Activated naive CD4-positive, alpha-beta T cell treated with anti-CD3 and anti-CD28 coated beads for 36 hours (primary cell): ENCODE measurements at regions of chr4 and their contacts with region 1.

Region 1: DNA sequence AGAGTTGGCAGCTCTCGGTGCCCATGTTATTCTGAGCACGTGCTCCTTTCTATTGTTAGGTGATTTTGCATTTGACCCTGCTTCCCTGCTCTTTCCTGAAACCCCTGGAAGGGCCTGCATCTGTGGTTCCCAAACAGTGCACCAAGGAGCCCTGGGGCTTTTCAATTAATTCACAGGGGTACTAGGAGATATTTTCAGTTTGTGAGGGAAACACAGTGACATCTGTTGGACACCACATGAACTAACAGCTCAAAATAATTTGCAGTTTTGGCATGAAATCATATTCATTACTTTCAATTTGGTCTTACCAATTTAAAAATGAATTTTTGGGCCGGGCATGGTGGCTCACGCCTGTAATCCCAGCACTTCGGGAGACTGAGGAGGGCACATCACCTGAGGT is 156.6 kb downstream of the GATB start:
- DNase-seq: no peak
- H3K4me3 Mint-ChIP-seq: no peak overlapping the region
- H3K27ac Mint-ChIP-seq: no peak overlapping the region
- H3K4me1 Mint-ChIP-seq: no peaks in the 10 kb centered on the region
- H3K27me3 Mint-ChIP-seq: no peaks in the 10 kb centered on the region

Region 2: DNA sequence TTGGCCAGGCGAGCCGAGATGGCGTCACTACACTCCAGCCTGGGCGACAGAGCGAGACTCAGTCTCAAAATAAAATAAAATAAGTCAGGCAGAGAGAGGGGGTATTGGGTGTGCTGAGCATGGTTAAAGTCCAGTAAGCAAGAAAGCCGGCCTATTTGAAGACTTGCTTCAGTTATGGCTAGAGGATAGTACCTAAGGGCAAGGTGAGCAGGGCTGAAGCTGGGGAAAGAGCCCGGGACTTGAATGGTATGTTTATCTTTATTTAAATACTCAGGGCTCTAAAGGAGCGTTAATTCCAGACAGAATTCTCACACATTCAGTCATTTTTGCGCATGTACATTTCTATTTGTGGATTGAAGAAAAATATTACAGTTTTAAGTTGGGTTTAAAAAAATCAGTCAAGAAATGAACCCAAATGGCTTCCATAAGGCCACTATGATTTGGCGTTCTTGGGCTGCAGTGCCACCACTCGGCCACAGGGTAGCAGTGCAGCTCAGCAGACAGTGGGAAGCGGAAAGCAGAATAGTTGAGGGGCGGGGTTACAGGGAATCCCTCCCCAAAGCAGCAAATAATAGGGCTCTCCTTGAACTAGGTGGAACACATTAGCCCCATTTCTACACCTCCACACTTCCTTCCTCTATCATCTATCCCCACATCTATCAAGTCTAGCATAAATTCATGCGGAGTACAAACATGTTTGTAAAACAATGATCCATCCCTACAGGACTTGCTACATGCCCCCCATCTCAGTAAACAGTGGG is 241.7 kb before region 1 on chr4:
- CTCF ChIA-PET with region 1: interaction called, 3 read pairs
- intact Hi-C with region 1: loop called (anchors 1 kb)
- DNase-seq: peak; percentile 90
- H3K4me3 Mint-ChIP-seq: no peak overlapping the region
- H3K27ac Mint-ChIP-seq: no peak overlapping the region
- H3K4me1 Mint-ChIP-seq: no peaks in the 10 kb centered on the region
- H3K27me3 Mint-ChIP-seq: no peaks in the 10 kb centered on the region